CD8-positive, alpha-beta memory T cell (primary cell): ENCODE measurements at regions of chr6 and their contacts with region 1.

Region 1: GRCh38 chr6:18062733-18063132 is 59.7 kb downstream of the NHLRC1 start:
- DNase-seq: no peak
- H3K4me3 ChIP-seq: no peak overlapping the region
- H3K4me3 Mint-ChIP-seq: no peak overlapping the region
- H3K27ac ChIP-seq: no peak overlapping the region
- H3K27ac Mint-ChIP-seq: no peak overlapping the region
- H3K4me1 ChIP-seq: no peaks in the 10 kb centered on the region
- H3K4me1 Mint-ChIP-seq: no peaks in the 10 kb centered on the region
- H3K27me3 ChIP-seq: no peaks in the 10 kb centered on the region
- H3K27me3 Mint-ChIP-seq: peaks cover 3 to 4% of the 10 kb centered on the region in 2 donors

Region 2: GRCh38 chr6:18091382-18091781 is 28.6 kb after region 1 on chr6:
- CTCF ChIA-PET with region 1: no interaction called
- POLR2A ChIA-PET with region 1: interaction called, 10 read pairs
- DNase-seq: no peak
- H3K4me3 ChIP-seq: no peak overlapping the region
- H3K4me3 Mint-ChIP-seq: no peak overlapping the region
- H3K27ac ChIP-seq: no peak overlapping the region
- H3K27ac Mint-ChIP-seq: no peak overlapping the region
- H3K4me1 ChIP-seq: no peaks in the 10 kb centered on the region
- H3K4me1 Mint-ChIP-seq: no peaks in the 10 kb centered on the region
- H3K27me3 ChIP-seq: no peaks in the 10 kb centered on the region
- H3K27me3 Mint-ChIP-seq: peaks cover 3 to 12% of the 10 kb centered on the region in 2 donors